Endothelial cell of umbilical vein (primary cell): ENCODE measurements at regions of chr1 and their contacts with region 1.

Region 1: GRCh38 chr1:26900001-26900814 is at the start of gene GPATCH3:
- DNase-seq: peak; percentile 90
- H3K4me3 ChIP-seq: peak within 1 kb of the TSS; percentile 54 to 89 (median 71)
- H3K27ac ChIP-seq: peak within 1 kb of the TSS; percentile 60
- H3K4me1 ChIP-seq: peaks cover 12% of the 10 kb centered on the region
- H3K27me3 ChIP-seq: no peaks in the 10 kb centered on the region
- CTCF ChIP-seq: no peak
- POLR2A ChIP-seq: peak; percentile 95
- total RNA-seq, gene GPATCH3: 14.8 and 17.7 TPM in 2 replicates

Region 2: DNA sequence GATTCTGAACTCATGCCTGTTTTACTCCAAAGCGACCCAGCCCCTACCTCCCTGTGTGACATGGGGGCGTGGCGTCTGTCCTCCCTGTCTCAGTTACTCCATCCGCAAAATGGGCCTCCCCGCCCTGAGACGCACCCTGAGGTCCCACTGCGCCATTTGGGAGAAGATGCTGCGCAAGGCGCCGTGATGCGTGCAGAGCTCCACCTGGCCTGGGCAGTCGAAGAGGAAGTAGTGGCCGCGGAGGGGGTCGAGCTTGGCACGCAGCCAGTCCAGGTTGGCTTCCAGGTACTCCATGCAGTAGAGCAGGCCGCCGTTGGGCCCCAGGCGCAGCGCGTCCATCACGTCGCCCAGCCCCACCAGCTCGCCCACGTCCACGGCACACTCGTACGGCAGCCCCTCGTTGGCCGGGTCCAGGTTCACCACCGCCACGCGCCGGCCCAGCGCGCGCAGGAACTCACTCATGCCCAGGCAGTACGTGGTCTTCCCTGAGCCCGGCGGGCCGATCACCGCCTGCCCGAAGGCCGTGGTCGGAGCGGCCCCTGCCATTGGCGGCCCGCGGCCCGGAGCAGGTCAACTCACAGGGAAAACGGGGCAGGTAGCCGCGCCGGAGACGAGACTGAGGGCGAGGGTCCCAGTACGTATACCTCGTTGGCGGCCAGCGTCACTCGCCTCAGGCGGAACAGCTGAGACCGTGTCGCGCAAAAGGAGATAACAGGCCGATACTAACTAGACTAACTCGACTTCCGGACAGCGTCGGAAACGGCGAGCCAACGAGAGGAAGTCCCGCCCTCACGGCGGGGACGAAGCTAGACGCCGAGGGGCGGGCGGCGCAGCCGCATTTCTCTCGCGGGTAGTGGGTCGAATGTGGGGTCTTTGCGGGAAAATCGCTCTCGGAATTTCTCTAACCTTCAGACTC is 10.4 kb before region 1 on chr1 and contains the start of gene GPN2:
- CTCF ChIA-PET with region 1: interaction called, 9 read pairs
- POLR2A ChIA-PET with region 1: interaction called, 17 read pairs
- dilution Hi-C with region 1: no loop called
- intact Hi-C with region 1: no loop called
- DNase-seq: peak; percentile 87
- H3K4me3 ChIP-seq: peak within 1 kb of the TSS; percentile 18 to 82 (median 54)
- H3K27ac ChIP-seq: peak within 1 kb of the TSS; percentile 46
- H3K4me1 ChIP-seq: peaks cover 6% of the 10 kb centered on the region
- H3K27me3 ChIP-seq: no peaks in the 10 kb centered on the region
- CTCF ChIP-seq: no peak
- POLR2A ChIP-seq: peak; percentile 95
- total RNA-seq, gene GPN2: 36.7 and 37.4 TPM in 2 replicates

Region 3: GRCh38 chr1:26910343-26911160 is 10.3 kb after region 1 on chr1:
- CTCF ChIA-PET with region 1: no interaction called
- POLR2A ChIA-PET with region 1: no interaction called
- dilution Hi-C with region 1: no loop called
- intact Hi-C with region 1: no loop called
- DNase-seq: no peak
- H3K4me3 ChIP-seq: no peak overlapping the region
- H3K27ac ChIP-seq: no peak overlapping the region
- H3K4me1 ChIP-seq: no peaks in the 10 kb centered on the region
- H3K27me3 ChIP-seq: peaks cover 0 to 1% of the 10 kb centered on the region in 2 experiments
- CTCF ChIP-seq: no peak
- POLR2A ChIP-seq: no peak

Region 4: GRCh38 chr1:26921540-26922430 is 21.6 kb after region 1 on chr1 and contains the start of gene NUDC:
- CTCF ChIA-PET with region 1: interaction called, 4 read pairs
- POLR2A ChIA-PET with region 1: interaction called, 3 read pairs
- dilution Hi-C with region 1: no loop called
- intact Hi-C with region 1: loop called (anchors 1 kb)
- DNase-seq: peak; percentile 98
- H3K4me3 ChIP-seq: peak within 1 kb of the TSS; percentile 49 to 100 (median 74)
- H3K27ac ChIP-seq: peak within 1 kb of the TSS; percentile 71
- H3K4me1 ChIP-seq: peaks cover 26% of the 10 kb centered on the region
- H3K27me3 ChIP-seq: no peaks in the 10 kb centered on the region
- CTCF ChIP-seq: no peak
- POLR2A ChIP-seq: peak; percentile 95
- total RNA-seq, gene NUDC: 95.0 and 102 TPM in 2 replicates

Region 5: GRCh38 chr1:27176323-27176722 is 276.1 kb after region 1 on chr1:
- CTCF ChIA-PET with region 1: no interaction called
- POLR2A ChIA-PET with region 1: no interaction called
- dilution Hi-C with region 1: no loop called
- intact Hi-C with region 1: no loop called
- DNase-seq: no peak
- H3K4me3 ChIP-seq: no peak overlapping the region
- H3K27ac ChIP-seq: no peak overlapping the region
- H3K4me1 ChIP-seq: no peaks in the 10 kb centered on the region
- H3K27me3 ChIP-seq: no peaks in the 10 kb centered on the region
- CTCF ChIP-seq: no peak
- POLR2A ChIP-seq: no peak